ENCODE measurements at regions of chr19 and their contacts with region 1.

Region 1: DNA sequence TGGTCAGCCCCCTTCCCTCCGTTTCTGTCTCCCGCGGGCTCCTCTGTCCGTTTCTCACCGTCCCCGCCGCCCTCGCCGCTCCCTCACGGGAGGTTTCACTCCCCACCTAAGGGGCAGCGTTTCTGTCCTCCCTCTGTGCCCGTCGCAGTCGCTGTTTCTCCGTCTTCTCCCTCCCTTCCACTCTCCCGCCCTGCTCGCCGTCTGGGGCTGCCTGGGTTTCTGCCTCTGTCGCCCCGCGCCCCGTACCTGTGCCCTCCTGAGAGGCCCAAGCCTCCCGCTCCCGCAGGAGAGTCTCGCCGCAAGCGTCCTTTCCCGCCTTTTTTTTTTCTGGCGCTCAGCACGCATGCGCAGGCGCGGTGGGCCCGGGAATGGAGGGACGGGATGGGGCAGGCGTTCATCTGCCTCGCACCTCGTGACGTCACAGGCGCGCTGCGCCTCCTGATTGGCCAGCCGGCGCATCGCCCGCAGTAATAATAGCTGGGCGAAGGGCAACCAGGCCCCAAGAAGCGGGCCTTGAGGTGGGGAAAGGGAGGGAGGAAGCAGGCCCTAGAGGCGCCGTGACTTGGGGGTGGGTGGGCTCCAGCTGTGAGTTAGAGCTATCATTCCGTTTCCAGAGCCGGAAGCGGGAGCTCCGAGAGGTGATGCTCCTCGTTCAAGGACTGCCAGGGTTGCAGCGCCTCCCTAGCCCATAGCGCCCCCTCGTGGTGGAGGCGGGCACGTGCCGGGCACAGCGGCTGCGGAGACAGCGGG is 15.4 kb downstream of the SSC5D start:
- DNase-seq: peak; percentile 96
- H3K4me3 ChIP-seq: peak overlapping the region; percentile 63
- H3K27ac ChIP-seq: peak overlapping the region; percentile 56
- H3K4me1 ChIP-seq: peaks cover 8% of the 10 kb centered on the region
- CTCF ChIP-seq: peak; percentile 98

Region 2: GRCh38 chr19:55467236-55468053 is 36.2 kb before region 1 on chr19:
- CTCF ChIA-PET with region 1: interaction called, 10 read pairs
- POLR2A ChIA-PET with region 1: interaction called, 3 read pairs
- intact Hi-C with region 1: loop called (anchors 1 kb)
- DNase-seq: peak; percentile 63
- H3K4me3 ChIP-seq: no peak overlapping the region
- H3K27ac ChIP-seq: no peak overlapping the region
- H3K4me1 ChIP-seq: peaks cover 5% of the 10 kb centered on the region
- CTCF ChIP-seq: peak; percentile 99